ENCODE measurements at regions of chr16 and their contacts with region 1.

Region 1: GRCh38 chr16:22190081-22190775 is 15.8 kb upstream of the EEF2K start:
- DNase-seq: peak; percentile 99
- H3K4me3 ChIP-seq: peak overlapping the region; percentile 49 to 88 (median 81)
- H3K27ac ChIP-seq: peak overlapping the region; percentile 35 to 65
- H3K4me1 ChIP-seq: peaks cover 23 to 54% (median 43%) of the 10 kb centered on the region in 4 experiments
- H3K27me3 ChIP-seq: no peaks in the 10 kb centered on the region

Region 2: GRCh38 chr16:21989133-21989532 is 201.1 kb before region 1 on chr16:
- CTCF ChIA-PET with region 1: interaction called, 16 read pairs
- POLR2A ChIA-PET with region 1: no interaction called
- DNase-seq: no peak
- H3K4me3 ChIP-seq: no peak overlapping the region
- H3K27ac ChIP-seq: no peak overlapping the region
- H3K4me1 ChIP-seq: no peaks in the 10 kb centered on the region
- H3K27me3 ChIP-seq: no peaks in the 10 kb centered on the region

Region 3: DNA sequence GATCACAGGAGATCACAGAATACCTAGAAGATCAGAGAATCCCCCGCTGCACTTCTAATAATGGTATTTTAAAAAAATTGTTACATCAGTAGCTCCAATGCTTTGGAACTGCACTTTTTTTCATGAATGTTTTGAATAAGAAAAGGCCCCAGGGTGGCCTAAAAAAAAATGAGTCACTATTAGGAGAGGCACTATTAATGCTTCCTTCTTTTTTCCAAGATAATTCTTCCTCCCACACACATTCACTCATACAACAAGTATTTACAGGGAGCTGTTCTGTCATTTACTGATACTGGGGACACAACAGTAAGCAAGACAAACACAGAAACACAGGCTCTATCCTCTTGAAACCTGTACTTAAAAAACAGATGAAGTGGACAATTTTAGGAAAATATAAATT is 188.6 kb before region 1 on chr16:
- CTCF ChIA-PET with region 1: interaction called, 33 read pairs
- POLR2A ChIA-PET with region 1: no interaction called
- DNase-seq: no peak
- H3K4me3 ChIP-seq: no peak overlapping the region
- H3K27ac ChIP-seq: no peak overlapping the region
- H3K4me1 ChIP-seq: peaks cover 5 to 16% (median 8%) of the 10 kb centered on the region in 4 experiments
- H3K27me3 ChIP-seq: peaks cover 0 to 2% (median 0%) of the 10 kb centered on the region in 5 experiments

Region 4: DNA sequence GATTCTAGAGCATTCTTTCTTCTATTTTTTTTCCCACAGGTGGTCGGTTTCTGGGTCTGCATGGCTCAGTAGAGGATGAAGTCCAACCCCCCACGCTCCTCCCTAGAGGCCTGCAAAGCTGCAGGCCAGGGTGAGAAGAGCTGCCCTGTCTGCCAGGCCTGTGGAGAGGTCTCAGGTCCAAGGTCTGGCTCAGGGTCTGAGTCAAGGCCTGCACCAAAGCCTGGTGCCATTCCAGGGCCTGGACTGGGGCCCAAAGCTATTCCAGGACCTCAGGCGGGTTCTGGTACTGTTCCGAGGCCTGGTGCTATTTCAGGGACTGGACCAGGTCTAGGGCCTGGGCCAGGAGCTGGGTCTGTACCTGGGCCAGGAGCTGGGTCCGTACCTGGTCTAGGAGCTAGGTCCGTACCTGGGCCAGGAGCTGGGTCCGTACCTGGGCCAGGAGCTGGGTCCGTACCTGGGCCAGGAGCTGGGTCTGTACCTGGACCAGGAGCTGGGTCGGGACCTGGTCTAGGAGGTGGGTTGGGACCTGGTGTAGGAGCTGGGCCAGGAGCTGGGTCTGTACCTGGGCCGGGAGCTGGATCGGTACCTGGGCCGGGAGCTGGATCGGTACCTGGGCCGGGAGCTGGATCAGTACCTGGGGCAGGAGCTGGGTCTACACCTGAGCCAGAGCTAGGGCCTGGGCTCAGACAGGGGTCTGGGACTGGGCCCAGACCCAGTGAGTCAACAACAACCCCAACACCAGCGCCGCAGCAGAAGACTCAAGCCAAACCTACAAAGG is 24.5 kb before region 1 on chr16:
- CTCF ChIA-PET with region 1: interaction called, 10 read pairs
- POLR2A ChIA-PET with region 1: no interaction called
- DNase-seq: no peak
- H3K4me3 ChIP-seq: no peak overlapping the region
- H3K27ac ChIP-seq: no peak overlapping the region
- H3K4me1 ChIP-seq: peaks cover 0 to 7% (median 3%) of the 10 kb centered on the region in 4 experiments
- H3K27me3 ChIP-seq: peaks cover 2 to 15% (median 9%) of the 10 kb centered on the region in 5 experiments

Region 5: DNA sequence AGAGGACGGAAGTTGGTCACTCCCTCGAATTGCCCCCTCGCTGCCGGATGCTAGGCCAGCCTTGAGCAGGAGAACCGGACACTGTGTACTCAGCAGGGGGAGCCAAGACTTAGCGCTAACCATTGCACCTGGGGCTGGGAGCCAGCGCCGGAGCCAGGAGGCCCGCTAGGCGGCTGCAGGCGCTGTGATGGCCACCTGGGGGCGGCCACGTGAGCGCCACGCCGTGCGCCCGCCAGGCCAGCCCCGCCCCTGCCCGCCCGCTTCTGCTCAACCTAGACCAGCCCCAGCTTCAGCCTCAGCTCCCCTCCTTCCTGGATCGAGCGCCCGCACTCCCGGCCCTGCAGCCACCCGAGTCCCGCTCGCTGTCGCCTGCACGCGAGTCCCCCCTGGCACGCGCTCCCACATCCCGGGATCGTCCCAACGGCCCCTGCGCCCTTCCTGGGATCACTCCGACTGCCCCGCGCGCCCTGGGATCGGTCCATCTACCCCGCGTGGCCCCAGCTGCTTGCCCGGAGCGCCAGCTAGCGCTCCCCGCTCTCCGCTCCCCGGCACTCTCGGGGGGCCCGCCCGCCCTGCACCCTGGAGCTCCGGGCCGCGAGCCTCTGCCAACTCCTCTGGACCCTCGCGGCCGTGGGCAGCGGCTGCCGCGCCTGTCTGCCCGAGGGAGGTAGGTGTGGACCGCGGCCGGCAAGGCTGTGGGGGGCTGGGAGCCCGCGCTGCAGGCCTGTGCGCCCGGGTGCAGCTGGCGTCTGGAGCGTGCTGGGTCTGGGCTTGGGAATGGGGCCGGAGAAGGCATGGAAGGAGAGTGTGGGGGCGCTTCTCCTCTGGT is 16.0 kb after region 1 on chr16 and contains the start of gene EEF2K:
- CTCF ChIA-PET with region 1: interaction called, 13 read pairs
- POLR2A ChIA-PET with region 1: interaction called, 3 read pairs
- DNase-seq: peak; percentile 88 to 90 (median 88)
- H3K4me3 ChIP-seq: peak within 1 kb of the TSS; percentile 67 to 97 (median 86)
- H3K27ac ChIP-seq: peak within 1 kb of the TSS; percentile 9 to 80
- H3K4me1 ChIP-seq: peaks cover 3 to 32% (median 20%) of the 10 kb centered on the region in 4 experiments
- H3K27me3 ChIP-seq: no peaks in the 10 kb centered on the region

Region 6: DNA sequence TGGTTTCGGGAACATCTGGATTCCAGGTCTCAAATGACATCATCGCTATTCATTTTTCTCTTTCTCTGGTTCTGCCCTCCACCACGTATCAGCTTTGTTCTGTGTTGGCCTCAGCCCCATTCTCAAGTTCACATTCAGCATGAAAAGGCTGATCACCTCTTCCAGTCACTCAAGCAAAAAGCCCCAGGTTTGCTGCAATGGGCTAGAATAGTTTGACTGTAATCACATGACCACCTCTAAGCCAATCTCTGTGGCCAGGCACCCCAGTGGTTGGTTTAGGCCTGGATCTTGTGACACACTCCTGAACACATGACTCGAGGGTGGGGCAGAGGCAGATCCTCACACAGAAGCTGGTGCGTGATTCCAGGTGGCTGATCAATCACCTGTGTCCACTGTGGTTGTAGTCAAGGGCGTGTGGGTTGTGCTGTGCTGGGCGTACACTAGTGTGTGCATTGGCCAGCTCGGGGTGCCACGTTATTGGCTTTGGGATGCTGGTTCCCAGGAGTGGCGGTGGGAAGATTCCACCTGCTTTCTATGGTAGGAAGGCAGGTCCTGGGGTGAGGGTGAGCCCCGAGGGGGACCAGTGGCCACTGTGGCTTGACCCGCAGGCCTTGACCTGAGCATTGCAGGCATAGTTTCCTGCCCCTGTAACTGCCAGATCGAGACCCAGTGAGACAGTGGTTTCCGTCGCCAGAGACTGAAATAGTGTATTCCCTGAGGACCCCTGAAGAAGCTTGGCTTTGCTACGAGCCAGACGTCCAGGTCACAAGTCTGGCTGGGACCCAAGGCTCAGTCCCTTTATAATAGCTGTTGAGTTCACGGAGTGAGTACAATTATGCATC is 27.9 kb after region 1 on chr16:
- CTCF ChIA-PET with region 1: no interaction called
- POLR2A ChIA-PET with region 1: no interaction called
- DNase-seq: peak in 1 of 3 donors; percentile 44
- H3K4me3 ChIP-seq: no peak overlapping the region
- H3K27ac ChIP-seq: no peak overlapping the region
- H3K4me1 ChIP-seq: peaks cover 2 to 20% (median 12%) of the 10 kb centered on the region in 4 experiments
- H3K27me3 ChIP-seq: no peaks in the 10 kb centered on the region

Region 7: DNA sequence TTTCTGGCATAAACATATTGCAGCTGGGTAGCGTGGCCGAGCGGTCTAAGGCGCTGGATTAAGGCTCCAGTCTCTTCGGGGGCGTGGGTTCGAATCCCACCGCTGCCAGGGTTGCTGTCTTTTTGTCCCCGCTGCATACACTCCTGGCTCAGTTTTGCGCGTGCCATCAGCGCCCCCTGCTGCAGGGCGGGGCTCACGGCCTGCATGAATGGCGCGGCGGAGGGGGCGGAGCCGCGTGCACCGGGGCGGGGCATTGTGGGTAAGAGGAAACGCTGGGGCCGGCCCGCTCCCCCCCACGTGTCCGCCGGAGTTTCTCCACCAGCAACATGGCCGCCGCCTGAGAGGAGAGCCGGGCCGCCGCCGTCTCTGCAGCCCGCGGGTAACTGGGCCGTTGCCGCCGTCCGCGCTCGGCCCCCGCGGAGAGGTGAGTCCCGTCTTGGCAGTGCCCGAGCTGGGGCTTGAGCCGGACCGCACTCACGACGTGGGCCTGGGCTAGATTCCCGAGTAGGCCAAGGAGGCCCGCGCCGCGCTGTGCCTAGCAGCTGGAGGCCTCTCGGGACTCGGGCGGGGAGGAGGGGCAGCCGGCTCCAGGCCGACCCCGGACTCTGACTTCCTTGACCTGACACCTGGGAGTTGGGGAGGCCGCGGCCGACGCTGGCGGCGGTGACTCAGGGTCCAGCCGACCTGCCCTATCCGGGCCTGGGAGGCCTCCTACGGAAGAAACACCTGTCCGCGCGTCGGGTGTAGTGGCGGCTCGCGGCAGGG is 107.1 kb after region 1 on chr16 and contains the start of gene POLR3E:
- CTCF ChIA-PET with region 1: interaction called, 14 read pairs
- POLR2A ChIA-PET with region 1: interaction called, 5 read pairs
- DNase-seq: peak; percentile 97 to 99 (median 98)
- H3K4me3 ChIP-seq: peak within 1 kb of the TSS; percentile 84 to 99 (median 95)
- H3K27ac ChIP-seq: peak within 1 kb of the TSS; percentile 92 to 97
- H3K4me1 ChIP-seq: peaks cover 0 to 28% (median 17%) of the 10 kb centered on the region in 4 experiments
- H3K27me3 ChIP-seq: no peaks in the 10 kb centered on the region

Region 8: DNA sequence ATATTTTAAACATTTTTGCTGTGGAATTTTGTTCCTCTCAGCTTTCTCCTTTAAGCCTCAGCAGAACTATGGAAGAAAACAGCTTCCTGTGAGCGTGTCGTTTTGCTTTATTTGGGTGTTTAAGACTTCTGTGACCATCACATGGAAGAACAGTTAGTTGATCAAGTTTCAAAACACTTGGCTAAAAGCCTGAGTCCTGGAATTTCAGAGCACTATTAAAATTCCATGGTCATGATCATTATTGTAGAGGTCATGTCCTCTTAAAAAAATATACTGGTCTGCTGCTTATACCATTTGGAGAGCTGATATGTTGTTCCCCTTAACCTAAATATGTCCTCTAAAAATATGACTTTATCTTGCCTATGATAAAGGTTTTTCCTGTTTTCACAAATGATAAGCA is 196.7 kb after region 1 on chr16:
- CTCF ChIA-PET with region 1: no interaction called
- POLR2A ChIA-PET with region 1: no interaction called
- DNase-seq: no peak
- H3K4me3 ChIP-seq: no peak overlapping the region
- H3K27ac ChIP-seq: no peak overlapping the region
- H3K4me1 ChIP-seq: no peaks in the 10 kb centered on the region
- H3K27me3 ChIP-seq: no peaks in the 10 kb centered on the region